ENCODE measurements at regions of chr5 and their contacts with region 1.

Region 1: DNA sequence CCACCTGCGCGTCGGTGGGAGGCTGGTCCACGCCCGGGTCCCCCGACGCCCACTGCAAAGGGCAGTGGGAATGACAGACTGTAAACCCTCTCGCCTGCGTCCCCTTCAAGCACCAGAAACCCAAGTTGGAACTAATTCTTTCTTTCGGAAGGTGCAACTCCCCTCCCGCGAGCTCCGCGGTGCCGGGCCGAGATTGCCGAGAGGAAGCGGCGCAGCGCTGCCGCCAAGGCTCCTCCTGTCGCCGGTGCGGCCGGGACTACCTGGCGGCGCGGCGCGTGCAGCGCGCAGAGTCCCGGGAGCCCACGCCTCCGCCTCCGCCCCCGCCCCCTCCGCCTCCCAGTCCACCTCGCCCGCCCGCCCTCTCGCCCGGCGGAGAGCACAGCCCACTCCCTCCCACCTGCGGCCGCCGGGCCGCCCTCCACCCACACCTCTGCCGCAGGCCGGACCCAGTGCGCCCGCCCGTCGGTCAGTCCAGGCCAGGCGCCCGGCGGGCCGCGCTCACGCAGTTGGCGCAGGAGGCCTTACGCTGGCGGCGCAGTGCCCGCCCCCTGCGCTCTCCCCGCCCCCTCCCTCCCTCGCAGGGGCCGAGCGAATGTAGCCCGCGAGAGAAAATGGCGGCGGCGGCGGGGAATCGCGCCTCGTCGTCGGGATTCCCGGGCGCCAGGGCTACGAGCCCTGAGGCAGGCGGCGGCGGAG is at the start of gene MAP3K1:
- DNase-seq: peak; percentile 75 to 92 (median 86)
- ATAC-seq: peak; percentile 83
- H3K4me3 ChIP-seq: peak within 1 kb of the TSS; percentile 95
- H3K4me3 Mint-ChIP-seq: peak within 1 kb of the TSS; percentile 93 to 97 (median 95)
- H3K27ac ChIP-seq: peak within 1 kb of the TSS; percentile 83
- H3K27ac Mint-ChIP-seq: peak within 1 kb of the TSS; percentile 91 to 97 (median 93)
- H3K4me1 ChIP-seq: peaks cover 8 to 17% of the 10 kb centered on the region in 2 donors
- H3K4me1 Mint-ChIP-seq: peaks cover 23 to 47% (median 41%) of the 10 kb centered on the region in 7 donors
- H3K27me3 ChIP-seq: no peaks in the 10 kb centered on the region
- H3K27me3 Mint-ChIP-seq: peaks cover 0 to 6% (median 0%) of the 10 kb centered on the region in 5 donors
- total RNA-seq, gene MAP3K1: 54.4 to 85.4 (median 77.3) TPM

Region 2: GRCh38 chr5:56155992-56156584 is 659.0 kb before region 1 on chr5:
- CTCF ChIA-PET with region 1: no interaction called
- POLR2A ChIA-PET with region 1: interaction called, 3 read pairs
- intact Hi-C with region 1: loop called in 1 of 2 experiments (anchors 5 kb)
- DNase-seq: no peak
- ATAC-seq: peak; percentile 48
- H3K4me3 ChIP-seq: no peak overlapping the region
- H3K4me3 Mint-ChIP-seq: peak overlapping the region; percentile 25 to 96 (median 94)
- H3K27ac ChIP-seq: peak overlapping the region; percentile 61
- H3K27ac Mint-ChIP-seq: peak overlapping the region; percentile 87 to 98 (median 95)
- H3K4me1 ChIP-seq: peaks cover 11 to 71% of the 10 kb centered on the region in 2 donors
- H3K4me1 Mint-ChIP-seq: peaks cover 60 to 89% (median 79%) of the 10 kb centered on the region in 7 donors
- H3K27me3 ChIP-seq: peaks cover 0 to 2% of the 10 kb centered on the region in 2 donors
- H3K27me3 Mint-ChIP-seq: no peaks in the 10 kb centered on the region

Region 3: GRCh38 chr5:56588636-56589480 is 226.3 kb before region 1 on chr5:
- CTCF ChIA-PET with region 1: interaction called, 6 read pairs
- POLR2A ChIA-PET with region 1: interaction called, 4 read pairs
- intact Hi-C with region 1: loop called (anchors 2 kb)
- DNase-seq: peak; percentile 30 to 75 (median 54)
- ATAC-seq: peak; percentile 90
- H3K4me3 ChIP-seq: no peak overlapping the region
- H3K4me3 Mint-ChIP-seq: peak overlapping the region; percentile 23 to 90 (median 68)
- H3K27ac ChIP-seq: peak overlapping the region; percentile 68
- H3K27ac Mint-ChIP-seq: peak overlapping the region; percentile 85 to 97 (median 93)
- H3K4me1 ChIP-seq: peaks cover 30 to 50% of the 10 kb centered on the region in 2 donors
- H3K4me1 Mint-ChIP-seq: peaks cover 36 to 66% (median 62%) of the 10 kb centered on the region in 7 donors
- H3K27me3 ChIP-seq: no peaks in the 10 kb centered on the region
- H3K27me3 Mint-ChIP-seq: peaks cover 0 to 4% (median 0%) of the 10 kb centered on the region in 5 donors

Region 4: DNA sequence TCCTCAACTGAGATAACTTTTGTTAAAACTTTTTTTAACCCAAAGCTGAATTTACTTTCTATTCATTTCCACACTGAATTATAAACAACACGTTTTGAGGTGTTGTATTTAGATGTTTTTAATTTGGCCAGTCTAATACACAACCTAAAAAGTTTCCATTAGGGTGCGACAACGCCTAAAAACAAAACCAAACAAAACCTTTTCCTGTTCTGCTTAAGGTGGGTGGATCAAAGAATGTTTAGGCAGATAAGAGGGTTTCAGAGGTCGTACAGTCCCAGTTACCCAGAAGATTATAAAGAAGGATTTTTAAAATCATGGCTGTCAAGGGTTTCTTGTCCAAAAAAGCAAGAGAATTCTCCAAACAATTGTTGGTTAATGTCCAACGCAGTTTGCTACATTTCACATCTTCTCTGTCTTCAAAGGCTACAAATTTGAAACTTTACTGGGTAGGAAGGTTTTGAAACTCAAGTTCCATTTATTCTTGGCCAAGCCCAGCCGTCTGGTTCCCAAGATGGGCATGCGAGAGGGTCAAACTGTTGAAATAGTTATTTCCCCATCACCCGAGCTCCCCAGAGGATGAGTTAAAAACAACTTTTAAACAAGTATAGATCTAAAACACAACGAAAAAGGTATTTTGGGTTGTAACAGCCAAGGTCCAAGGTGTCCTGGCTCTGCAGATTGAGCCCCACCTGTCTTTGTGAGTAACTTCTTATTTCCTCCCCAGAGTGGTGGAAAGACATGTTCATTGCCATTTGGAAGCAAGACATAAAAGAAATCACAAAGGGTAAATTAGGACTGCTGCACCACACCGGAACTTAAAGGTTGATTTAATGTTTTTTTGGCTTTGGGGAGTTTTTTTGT is 122.5 kb before region 1 on chr5:
- CTCF ChIA-PET with region 1: no interaction called
- POLR2A ChIA-PET with region 1: interaction called, 25 read pairs
- intact Hi-C with region 1: loop called (anchors 2 kb)
- DNase-seq: peak in 4 of 9 donors; percentile 18 to 47 (median 35)
- ATAC-seq: peak; percentile 53
- H3K4me3 ChIP-seq: peak overlapping the region; percentile 37
- H3K4me3 Mint-ChIP-seq: peak overlapping the region; percentile 55 to 89 (median 75)
- H3K27ac ChIP-seq: peak overlapping the region; percentile 62
- H3K27ac Mint-ChIP-seq: peak overlapping the region; percentile 79 to 98 (median 89)
- H3K4me1 ChIP-seq: peaks cover 24 to 64% of the 10 kb centered on the region in 2 donors
- H3K4me1 Mint-ChIP-seq: peaks cover 61 to 99% (median 89%) of the 10 kb centered on the region in 7 donors
- H3K27me3 ChIP-seq: no peaks in the 10 kb centered on the region
- H3K27me3 Mint-ChIP-seq: peaks cover 0 to 2% (median 0%) of the 10 kb centered on the region in 5 donors

Region 5: GRCh38 chr5:56783261-56783660 is 31.9 kb before region 1 on chr5:
- CTCF ChIA-PET with region 1: no interaction called
- POLR2A ChIA-PET with region 1: no interaction called
- intact Hi-C with region 1: no loop called
- DNase-seq: no peak
- ATAC-seq: no peak
- H3K4me3 ChIP-seq: no peak overlapping the region
- H3K4me3 Mint-ChIP-seq: no peak overlapping the region
- H3K27ac ChIP-seq: no peak overlapping the region
- H3K27ac Mint-ChIP-seq: no peak overlapping the region
- H3K4me1 ChIP-seq: no peaks in the 10 kb centered on the region
- H3K4me1 Mint-ChIP-seq: no peaks in the 10 kb centered on the region
- H3K27me3 ChIP-seq: no peaks in the 10 kb centered on the region
- H3K27me3 Mint-ChIP-seq: peaks cover 0 to 31% (median 0%) of the 10 kb centered on the region in 5 donors

Region 6: GRCh38 chr5:56852228-56853000 is 37.3 kb after region 1 on chr5:
- CTCF ChIA-PET with region 1: no interaction called
- POLR2A ChIA-PET with region 1: no interaction called
- intact Hi-C with region 1: loop called in 1 of 2 experiments (anchors 2 kb)
- DNase-seq: no peak
- ATAC-seq: peak; percentile 48
- H3K4me3 ChIP-seq: no peak overlapping the region
- H3K4me3 Mint-ChIP-seq: peak overlapping the region; percentile 46 to 73 (median 66)
- H3K27ac ChIP-seq: no peak overlapping the region
- H3K27ac Mint-ChIP-seq: peak overlapping the region; percentile 19 to 89 (median 64)
- H3K4me1 ChIP-seq: peaks cover 40 to 72% of the 10 kb centered on the region in 2 donors
- H3K4me1 Mint-ChIP-seq: peaks cover 71 to 98% (median 90%) of the 10 kb centered on the region in 7 donors
- H3K27me3 ChIP-seq: no peaks in the 10 kb centered on the region
- H3K27me3 Mint-ChIP-seq: no peaks in the 10 kb centered on the region

Region 7: GRCh38 chr5:57221049-57221568 is 406.0 kb after region 1 on chr5:
- CTCF ChIA-PET with region 1: no interaction called
- POLR2A ChIA-PET with region 1: no interaction called
- intact Hi-C with region 1: loop called (anchors 1 to 2 kb)
- DNase-seq: peak in 7 of 9 donors; percentile 41 to 79 (median 73)
- ATAC-seq: peak; percentile 86
- H3K4me3 ChIP-seq: no peak overlapping the region
- H3K4me3 Mint-ChIP-seq: peak overlapping the region in 1 of 10 donors; percentile 30
- H3K27ac ChIP-seq: no peak overlapping the region
- H3K27ac Mint-ChIP-seq: peak overlapping the region in 8 of 9 donors; percentile 19 to 87 (median 76)
- H3K4me1 ChIP-seq: peaks cover 4 to 7% of the 10 kb centered on the region in 2 donors
- H3K4me1 Mint-ChIP-seq: peaks cover 3 to 62% (median 41%) of the 10 kb centered on the region in 7 donors
- H3K27me3 ChIP-seq: no peaks in the 10 kb centered on the region
- H3K27me3 Mint-ChIP-seq: no peaks in the 10 kb centered on the region

Region 8: GRCh38 chr5:57316798-57317327 is 501.8 kb after region 1 on chr5:
- CTCF ChIA-PET with region 1: no interaction called
- POLR2A ChIA-PET with region 1: no interaction called
- intact Hi-C with region 1: no loop called
- DNase-seq: no peak
- ATAC-seq: peak; percentile 40
- H3K4me3 ChIP-seq: no peak overlapping the region
- H3K4me3 Mint-ChIP-seq: no peak overlapping the region
- H3K27ac ChIP-seq: no peak overlapping the region
- H3K27ac Mint-ChIP-seq: no peak overlapping the region
- H3K4me1 ChIP-seq: no peaks in the 10 kb centered on the region
- H3K4me1 Mint-ChIP-seq: peaks cover 0 to 3% (median 0%) of the 10 kb centered on the region in 7 donors
- H3K27me3 ChIP-seq: no peaks in the 10 kb centered on the region
- H3K27me3 Mint-ChIP-seq: peaks cover 0 to 9% (median 0%) of the 10 kb centered on the region in 5 donors